Prostate gland (tissue), 2 donors: ENCODE measurements at regions of chrX and their contacts with region 1.

Region 1: DNA sequence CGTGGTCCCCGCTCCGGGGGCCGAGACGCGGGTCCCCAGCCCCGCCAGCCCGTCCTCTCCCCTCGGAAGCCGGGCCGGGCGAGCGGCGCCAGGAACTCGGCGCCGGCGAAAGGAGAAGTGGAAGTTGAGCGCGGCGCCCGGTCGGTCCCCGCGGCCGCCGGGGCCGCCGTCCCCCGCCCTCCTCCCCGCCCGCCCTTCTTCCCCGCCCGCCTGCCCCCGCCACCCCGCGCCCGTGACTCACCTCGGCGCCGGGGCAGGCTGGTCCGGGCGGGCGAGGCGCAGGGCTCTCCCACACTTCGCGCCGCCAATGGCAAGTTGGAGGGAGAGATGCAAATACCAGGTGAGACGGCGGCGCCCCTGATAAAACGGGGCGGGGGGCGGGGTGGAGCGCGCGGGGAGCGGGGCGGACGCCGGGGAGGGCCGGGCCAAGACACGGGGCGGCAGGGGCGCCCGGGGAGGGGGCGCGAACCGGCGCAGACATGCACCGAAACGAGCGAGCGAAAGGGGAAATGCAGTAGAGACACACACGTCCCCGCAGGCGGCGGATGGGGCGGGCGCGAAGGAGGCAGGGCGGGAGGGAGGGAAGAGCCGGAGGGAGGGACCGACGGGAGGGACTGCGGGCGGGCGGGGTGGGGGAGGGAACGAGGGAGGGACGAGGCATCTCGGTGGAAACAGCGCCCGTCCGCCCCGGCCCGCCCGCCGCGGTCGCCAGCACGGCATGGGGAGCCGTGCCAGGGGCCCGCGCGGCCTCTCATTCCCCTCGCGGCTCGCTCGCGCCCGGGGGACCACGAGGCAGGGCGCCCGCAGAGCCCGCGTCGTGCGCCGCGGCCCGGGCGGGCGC is at the start of gene ELF4:
- DNase-seq: no peak
- H3K4me3 ChIP-seq: peak within 1 kb of the TSS; percentile 51
- H3K27ac ChIP-seq: peak within 1 kb of the TSS; percentile 74 to 84
- H3K4me1 ChIP-seq: no peaks in the 10 kb centered on the region
- H3K27me3 ChIP-seq: no peaks in the 10 kb centered on the region
- CTCF ChIP-seq: no peak
- POLR2A ChIP-seq: peak; percentile 35
- total RNA-seq, gene ELF4: 6.5 to 6.9 TPM

Region 2: DNA sequence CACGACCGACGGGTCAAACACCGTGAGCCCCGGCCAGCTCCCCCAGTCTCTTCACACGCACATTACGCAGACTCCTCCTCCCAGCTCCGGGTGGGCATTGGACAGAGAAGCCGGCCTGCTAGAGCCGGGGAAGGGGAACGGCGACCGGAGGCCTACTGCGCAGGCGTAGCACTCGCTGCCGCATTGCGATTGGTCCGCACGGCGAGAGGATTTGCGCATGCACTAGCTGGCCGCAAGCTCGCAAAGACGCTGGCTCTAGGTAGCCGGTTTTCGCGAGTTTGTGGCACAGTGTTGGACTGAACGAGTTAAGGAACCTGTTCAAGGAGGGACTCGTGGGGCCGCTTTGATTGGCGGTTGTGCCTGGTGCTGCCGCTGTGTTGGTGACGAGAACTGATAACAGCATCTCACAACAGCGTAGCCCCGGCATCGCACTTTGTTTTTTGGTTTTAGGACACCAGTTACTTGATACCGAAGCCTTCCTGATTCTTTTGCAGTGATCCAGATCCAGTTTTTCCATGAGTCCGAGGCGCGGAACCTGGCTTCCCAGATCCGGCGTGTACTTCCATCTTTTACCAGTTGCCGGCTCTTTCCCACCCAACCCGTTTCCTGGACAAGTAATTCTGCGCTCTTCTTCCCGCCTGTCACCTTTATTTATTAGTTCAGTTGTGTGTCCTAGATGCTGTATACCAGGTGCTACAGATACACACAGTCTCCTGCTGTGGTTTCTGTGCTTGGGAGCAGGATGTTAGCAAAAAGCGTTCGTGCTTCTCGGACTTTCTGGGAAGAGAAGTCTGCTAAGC is 55.3 kb after region 1 on chrX and contains the start of gene AIFM1:
- intact Hi-C with region 1: loop called (anchors 5 kb)
- DNase-seq: peak; percentile 75
- H3K4me3 ChIP-seq: peak within 1 kb of the TSS; percentile 42 to 48
- H3K27ac ChIP-seq: peak within 1 kb of the TSS; percentile 78 to 84
- H3K4me1 ChIP-seq: no peaks in the 10 kb centered on the region
- H3K27me3 ChIP-seq: no peaks in the 10 kb centered on the region
- CTCF ChIP-seq: no peak
- POLR2A ChIP-seq: peak; percentile 59
- total RNA-seq, gene AIFM1: 21.8 to 32.2 TPM